Activated T-helper 2 cell treated with anti-CD3 and anti-CD28 coated beads, Interferon-gamma antibody, Interleukin-2, Interleukin-4, amounts not matched to agents 10 μg/mL and 5 μg/mL and 100 μg/mL, durations not matched to agents 14 hours and 24 hours and 36 hours (primary cell): ENCODE measurements at regions of chr12 and their contacts with region 1.

Region 1: GRCh38 chr12:110100315-110100970 is 23.7 kb upstream of the IFT81 start:
- DNase-seq: peak; percentile 46
- H3K4me3 Mint-ChIP-seq: no peak overlapping the region
- H3K27ac Mint-ChIP-seq: peak overlapping the region; percentile 23
- H3K4me1 Mint-ChIP-seq: peaks cover 14% of the 10 kb centered on the region
- H3K27me3 Mint-ChIP-seq: no peaks in the 10 kb centered on the region

Region 2: GRCh38 chr12:110245369-110245772 is 144.9 kb after region 1 on chr12:
- intact Hi-C with region 1: loop called (anchors 1 kb)
- DNase-seq: peak; percentile 18
- H3K4me3 Mint-ChIP-seq: no peak overlapping the region
- H3K27ac Mint-ChIP-seq: no peak overlapping the region
- H3K4me1 Mint-ChIP-seq: no peaks in the 10 kb centered on the region
- H3K27me3 Mint-ChIP-seq: peaks cover 3% of the 10 kb centered on the region

Region 3: GRCh38 chr12:110431957-110432587 is 331.6 kb after region 1 on chr12:
- intact Hi-C with region 1: loop called (anchors 1 kb)
- DNase-seq: no peak
- H3K4me3 Mint-ChIP-seq: no peak overlapping the region
- H3K27ac Mint-ChIP-seq: no peak overlapping the region
- H3K4me1 Mint-ChIP-seq: peaks cover 1% of the 10 kb centered on the region
- H3K27me3 Mint-ChIP-seq: no peaks in the 10 kb centered on the region